Gastrocnemius medialis (tissue), 4 donors: ENCODE measurements at regions of chrX and their contacts with region 1.

Region 1: DNA sequence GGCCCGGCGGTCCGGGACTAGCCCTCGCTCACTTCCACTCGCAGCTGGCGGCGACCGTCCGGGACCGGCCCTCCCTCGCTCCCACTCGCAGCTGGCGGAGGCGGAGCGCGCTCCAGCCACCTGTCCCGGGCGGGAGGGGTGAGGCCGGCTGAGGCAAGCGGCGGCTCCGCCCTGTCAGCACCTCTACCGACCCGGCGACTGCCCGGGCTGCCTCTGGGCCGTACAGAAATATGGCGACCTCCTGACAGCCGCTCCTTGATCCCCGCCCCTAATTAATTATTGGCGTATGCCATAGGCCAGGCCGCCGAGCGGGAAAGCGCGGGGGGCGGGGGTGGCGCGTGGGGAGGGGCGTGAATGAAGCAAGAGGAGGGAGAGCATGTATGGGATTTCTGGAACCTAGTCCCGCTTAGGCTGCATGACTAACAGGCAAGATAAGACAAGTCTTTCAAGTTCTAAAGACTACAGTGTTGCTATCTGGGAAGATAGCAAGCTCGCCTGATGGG is at the start of gene MORC4:
- DNase-seq: peak; percentile 50 to 68
- ATAC-seq: peak; percentile 90 to 91
- H3K4me3 ChIP-seq: peak within 1 kb of the TSS; percentile 53 to 61 (median 60)
- H3K27ac ChIP-seq: peak within 1 kb of the TSS; percentile 55 to 69 (median 64)
- H3K4me1 ChIP-seq: no peaks in the 10 kb centered on the region
- H3K27me3 ChIP-seq: no peaks in the 10 kb centered on the region
- CTCF ChIP-seq: no peak
- POLR2A ChIP-seq: peak; percentile 52 to 73
- total RNA-seq, gene MORC4: 5.0 to 10.0 (median 8.4) TPM

Region 2: GRCh38 chrX:106959901-106960300 is 40.2 kb before region 1 on chrX:
- in situ Hi-C with region 1: no loop called
- intact Hi-C with region 1: no loop called
- DNase-seq: no peak
- ATAC-seq: no peak
- H3K4me3 ChIP-seq: no peak overlapping the region
- H3K27ac ChIP-seq: no peak overlapping the region
- H3K4me1 ChIP-seq: no peaks in the 10 kb centered on the region
- H3K27me3 ChIP-seq: no peaks in the 10 kb centered on the region
- CTCF ChIP-seq: no peak
- POLR2A ChIP-seq: no peak

Region 3: DNA sequence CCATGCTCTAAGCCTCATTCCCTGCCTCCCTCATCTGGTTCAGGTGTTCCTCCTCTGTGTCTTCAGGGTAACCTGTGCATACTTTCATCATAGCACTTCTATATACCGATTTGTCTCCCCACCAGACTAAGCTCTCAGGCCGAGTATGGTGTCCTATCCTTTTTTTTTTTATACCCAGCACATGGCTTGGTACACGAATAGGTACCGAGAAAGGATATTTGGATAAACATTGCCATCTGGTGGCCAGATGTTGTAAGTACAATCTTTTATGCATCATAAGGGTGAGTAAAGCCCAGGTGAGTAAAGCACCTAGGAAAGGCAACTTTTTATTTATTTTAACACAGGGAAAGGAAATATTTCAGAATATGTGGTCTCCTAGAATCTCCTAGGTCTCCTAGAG is 894.0 kb after region 1 on chrX:
- in situ Hi-C with region 1: no loop called
- intact Hi-C with region 1: loop called (anchors 10 kb)
- DNase-seq: no peak
- ATAC-seq: peak in 1 of 2 donors; percentile 87
- H3K4me3 ChIP-seq: no peak overlapping the region
- H3K27ac ChIP-seq: no peak overlapping the region
- H3K4me1 ChIP-seq: no peaks in the 10 kb centered on the region
- H3K27me3 ChIP-seq: no peaks in the 10 kb centered on the region
- CTCF ChIP-seq: peak; percentile 44 to 65 (median 57)
- POLR2A ChIP-seq: no peak